ENCODE measurements at regions of chr2 and their contacts with region 1.

Region 1: DNA sequence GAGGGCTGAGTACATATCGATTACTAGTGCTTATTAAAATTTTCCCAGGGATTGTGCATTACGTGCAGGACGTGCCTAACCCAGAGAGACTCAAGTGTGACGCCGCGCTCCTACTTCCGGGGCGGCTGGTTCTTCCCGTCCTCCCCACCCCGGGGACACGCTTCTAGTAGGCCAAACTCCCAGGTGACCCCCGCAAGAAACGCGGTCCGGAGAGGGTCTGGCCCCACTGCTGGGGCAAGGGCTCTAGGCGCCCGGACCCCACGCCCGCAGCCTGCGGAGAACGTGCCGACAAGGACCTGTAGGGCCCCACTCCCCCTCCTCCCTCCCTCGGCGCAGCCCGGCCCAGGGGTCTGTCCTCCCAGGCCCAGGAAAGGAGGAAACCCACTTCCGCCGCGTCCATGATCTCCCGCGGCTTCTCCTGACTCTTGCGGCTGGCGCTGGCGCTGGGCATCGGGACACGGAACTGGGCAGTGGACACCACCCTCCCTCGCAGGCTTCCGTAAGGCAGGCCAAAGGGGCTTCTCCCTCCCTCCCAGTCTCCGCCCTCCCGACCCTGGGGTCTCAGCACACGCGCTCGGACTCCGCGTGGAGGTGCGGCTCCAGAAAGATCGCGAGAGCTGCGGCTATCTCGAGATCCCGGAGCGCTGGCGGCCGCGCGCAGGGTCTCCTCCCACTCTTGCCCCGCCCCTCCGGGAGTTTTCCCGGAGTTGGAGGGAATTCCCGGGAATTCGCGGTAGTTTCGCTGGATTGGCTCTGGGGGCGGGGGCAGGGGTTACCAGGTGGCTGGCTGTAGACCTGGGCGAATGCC is at the start of gene DARS1:
- DNase-seq: peak; percentile 92
- ATAC-seq: peak; percentile 92
- H3K4me3 ChIP-seq: peak within 1 kb of the TSS; percentile 89
- H3K27ac ChIP-seq: peak within 1 kb of the TSS; percentile 95
- H3K4me1 ChIP-seq: peaks cover 19% of the 10 kb centered on the region
- H3K27me3 ChIP-seq: no peaks in the 10 kb centered on the region
- CTCF ChIP-seq: no peak
- total RNA-seq, gene DARS1: 56.7 and 78.6 TPM in 2 replicates

Region 2: DNA sequence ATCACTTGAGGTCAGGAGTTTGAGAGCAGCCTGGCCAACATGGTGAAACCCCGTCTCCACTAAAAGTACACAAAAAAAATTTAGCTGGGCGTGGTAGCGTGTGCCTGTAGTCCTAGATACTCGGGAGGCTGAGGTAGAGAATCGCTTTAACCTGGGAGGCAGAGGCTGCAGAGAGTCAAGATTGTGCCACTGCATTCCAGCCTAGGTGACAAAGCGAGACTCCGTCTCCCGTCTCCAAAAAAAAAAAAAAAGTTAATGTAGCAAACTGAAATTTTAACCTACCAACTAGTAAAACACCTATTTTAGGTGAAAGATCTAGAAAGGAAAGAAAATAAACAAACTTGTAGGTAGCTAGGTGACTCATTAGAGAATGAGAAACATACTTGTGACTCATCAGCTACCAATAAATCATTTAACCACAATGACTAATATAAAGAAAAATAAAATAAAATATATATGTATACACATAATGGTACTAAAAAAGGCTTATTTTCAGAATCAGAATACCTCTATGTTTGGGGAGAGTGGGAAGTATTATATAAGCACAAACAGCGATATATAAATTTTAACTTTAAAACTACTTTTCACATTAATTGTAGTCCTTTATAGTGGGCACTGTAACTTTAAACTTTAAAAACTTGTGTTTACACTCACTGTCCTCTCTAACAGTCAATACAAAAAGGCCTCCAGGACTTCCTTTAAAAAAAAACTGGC is 36.4 kb before region 1 on chr2:
- CTCF ChIA-PET with region 1: no interaction called
- POLR2A ChIA-PET with region 1: interaction called, 3 read pairs
- intact Hi-C with region 1: loop called (anchors 1 kb)
- DNase-seq: peak; percentile 89
- ATAC-seq: peak; percentile 84
- H3K4me3 ChIP-seq: peak overlapping the region; percentile 60
- H3K27ac ChIP-seq: peak overlapping the region; percentile 93
- H3K4me1 ChIP-seq: peaks cover 30% of the 10 kb centered on the region
- H3K27me3 ChIP-seq: no peaks in the 10 kb centered on the region
- CTCF ChIP-seq: no peak

Region 3: DNA sequence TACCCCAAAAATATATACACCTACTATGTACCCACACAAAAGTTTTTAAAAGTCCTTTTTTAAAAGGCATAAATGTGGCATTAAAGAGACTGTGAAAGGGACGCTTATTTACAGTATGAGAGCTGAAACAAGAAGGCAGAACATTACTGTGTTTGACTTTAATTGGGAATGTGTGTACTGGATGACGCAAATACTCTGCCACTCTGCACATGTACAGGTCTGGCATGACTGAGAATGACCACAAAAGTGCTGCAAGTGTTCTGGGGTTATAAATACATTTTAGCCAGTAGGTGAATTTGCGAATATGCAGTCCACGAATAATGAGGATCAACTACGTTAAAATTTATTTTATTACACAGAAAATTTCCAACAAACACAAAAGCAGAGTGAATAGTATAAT is 11.2 kb before region 1 on chr2:
- CTCF ChIA-PET with region 1: no interaction called
- POLR2A ChIA-PET with region 1: no interaction called
- intact Hi-C with region 1: no loop called
- DNase-seq: no peak
- ATAC-seq: no peak
- H3K4me3 ChIP-seq: no peak overlapping the region
- H3K27ac ChIP-seq: no peak overlapping the region
- H3K4me1 ChIP-seq: no peaks in the 10 kb centered on the region
- H3K27me3 ChIP-seq: no peaks in the 10 kb centered on the region
- CTCF ChIP-seq: no peak

Region 4: DNA sequence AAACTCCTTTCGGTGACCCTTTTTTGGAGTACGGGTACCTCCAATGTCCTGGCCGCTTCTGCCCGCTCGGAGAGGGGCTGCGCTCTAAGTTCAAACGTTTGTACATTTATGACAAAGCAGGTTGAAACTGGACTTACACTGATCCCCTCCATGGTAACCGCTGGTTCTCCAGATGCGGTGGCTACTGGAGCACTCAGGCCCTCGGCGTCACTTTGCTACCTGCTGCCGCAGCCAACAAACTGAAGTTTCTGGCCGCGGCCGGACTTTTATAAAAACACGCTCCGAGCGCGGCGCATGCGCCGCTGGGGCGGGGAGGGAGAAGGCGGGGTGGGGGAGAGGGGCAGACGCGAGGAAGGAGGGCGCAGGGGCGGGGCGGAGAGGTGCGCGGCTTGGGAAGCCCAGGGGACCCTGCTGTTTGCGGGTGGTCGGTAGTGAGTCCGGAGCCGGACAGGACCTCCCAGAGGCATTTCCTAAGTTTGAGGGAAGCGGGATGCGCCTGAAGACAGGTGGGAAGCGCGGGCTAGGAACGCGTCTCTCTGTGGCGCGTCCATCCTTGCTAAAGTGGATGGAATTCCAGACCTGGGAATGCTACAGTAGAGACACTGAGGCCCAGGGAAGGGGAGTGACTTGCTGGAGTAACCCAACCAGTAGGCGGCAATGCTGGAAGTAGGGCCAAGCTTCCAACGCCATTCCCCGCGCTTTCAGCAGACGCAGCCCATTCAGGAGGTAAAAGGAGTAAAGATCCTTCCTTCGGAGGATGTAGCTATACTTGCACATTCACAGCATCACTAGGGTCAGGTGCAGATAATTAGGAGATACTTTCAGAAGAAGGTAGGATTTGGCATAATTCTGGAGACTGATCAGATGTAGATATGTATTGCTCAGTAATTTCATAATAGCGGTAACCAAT is 132.9 kb after region 1 on chr2 and contains the start of gene CXCR4:
- CTCF ChIA-PET with region 1: no interaction called
- POLR2A ChIA-PET with region 1: no interaction called
- intact Hi-C with region 1: loop called (anchors 5 kb)
- DNase-seq: peak; percentile 58
- ATAC-seq: peak; percentile 40
- H3K4me3 ChIP-seq: peak within 1 kb of the TSS; percentile 65
- H3K27ac ChIP-seq: no peak within 1 kb of the TSS
- H3K4me1 ChIP-seq: peaks cover 17% of the 10 kb centered on the region; the same call in 1 of the 2 replicates
- H3K27me3 ChIP-seq: peaks cover 98% of the 10 kb centered on the region
- CTCF ChIP-seq: no peak
- total RNA-seq, gene CXCR4: 2.1 TPM in 1 of 2 replicates, not detected in the other